Heart left ventricle (tissue), 16 donors: ENCODE measurements at regions of chr10 and their contacts with region 1.

Region 1: GRCh38 chr10:101840741-101841453 is 2.7 kb downstream of the KCNIP2 start:
- DNase-seq: peak; percentile 79 to 89 (median 83)
- ATAC-seq: peak; percentile 70 to 88 (median 85)
- H3K4me3 ChIP-seq: peak overlapping the region; percentile 1 to 59 (median 46)
- H3K27ac ChIP-seq: peak overlapping the region in 2 of 12 donors; percentile 22 to 50
- H3K4me1 ChIP-seq: peaks cover 0 to 75% (median 29%) of the 10 kb centered on the region in 12 donors
- H3K27me3 ChIP-seq: no peaks in the 10 kb centered on the region
- CTCF ChIP-seq: peak; percentile 86 to 96 (median 91)
- POLR2A ChIP-seq: no peak

Region 2: GRCh38 chr10:101879456-101880231 is 38.7 kb after region 1 on chr10:
- intact Hi-C with region 1: loop called in 2 of 10 experiments (anchors 2 to 5 kb)
- DNase-seq: no peak
- ATAC-seq: no peak
- H3K4me3 ChIP-seq: no peak overlapping the region
- H3K27ac ChIP-seq: no peak overlapping the region
- H3K4me1 ChIP-seq: peaks cover 0 to 30% (median 6%) of the 10 kb centered on the region in 12 donors
- H3K27me3 ChIP-seq: no peaks in the 10 kb centered on the region
- CTCF ChIP-seq: no peak
- POLR2A ChIP-seq: no peak

Region 3: GRCh38 chr10:102009801-102010425 is 169.0 kb after region 1 on chr10:
- intact Hi-C with region 1: loop called (anchors 1 to 5 kb)
- DNase-seq: peak in 4 of 5 donors; percentile 33 to 53 (median 44)
- ATAC-seq: peak; percentile 83 to 97 (median 96)
- H3K4me3 ChIP-seq: no peak overlapping the region
- H3K27ac ChIP-seq: no peak overlapping the region
- H3K4me1 ChIP-seq: peaks cover 0 to 12% (median 1%) of the 10 kb centered on the region in 12 donors
- H3K27me3 ChIP-seq: no peaks in the 10 kb centered on the region
- CTCF ChIP-seq: peak; percentile 73 to 93 (median 90)
- POLR2A ChIP-seq: no peak

Region 4: DNA sequence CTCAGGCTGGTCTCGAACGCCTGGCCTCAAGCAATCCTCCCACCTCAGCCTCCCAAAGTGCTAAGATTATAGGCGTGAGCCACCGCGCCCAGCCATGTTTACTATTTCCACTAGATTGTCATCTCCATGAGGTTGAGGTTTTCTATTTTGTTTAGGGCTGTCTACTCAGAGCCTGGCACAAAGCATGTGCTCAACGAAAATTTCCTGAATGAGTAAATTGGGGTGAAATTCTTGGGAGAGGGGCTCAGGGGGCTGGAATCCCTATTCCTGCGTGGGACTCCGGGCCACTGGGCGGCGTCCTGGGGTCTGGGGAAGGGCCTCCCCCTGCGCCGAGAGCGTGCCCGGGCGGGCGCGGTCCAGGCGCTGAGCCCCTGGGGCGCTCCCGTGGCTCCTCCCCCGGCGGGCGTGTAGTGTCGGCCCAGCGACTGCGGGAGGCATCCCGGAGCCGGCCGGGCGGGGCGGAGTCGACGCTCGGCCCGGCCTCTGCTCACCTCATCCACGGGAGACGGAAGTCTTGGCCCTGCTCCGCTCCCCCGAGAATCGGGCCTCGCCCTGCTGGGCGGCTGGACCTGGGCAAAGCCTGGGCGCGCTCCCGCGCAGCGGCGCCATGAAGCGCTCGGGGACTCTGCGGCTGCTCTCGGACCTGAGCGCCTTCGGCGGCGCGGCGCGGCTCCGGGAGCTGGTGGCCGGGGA is 224.1 kb after region 1 on chr10 and contains the start of gene HPS6:
- intact Hi-C with region 1: loop called in 3 of 10 experiments (anchors 2 to 5 kb)
- DNase-seq: peak; percentile 92 to 96 (median 95)
- ATAC-seq: peak; percentile 92 to 99 (median 98)
- H3K4me3 ChIP-seq: peak within 1 kb of the TSS; percentile 79 to 99 (median 94)
- H3K27ac ChIP-seq: peak within 1 kb of the TSS; percentile 85 to 98 (median 92)
- H3K4me1 ChIP-seq: peaks cover 8 to 50% (median 33%) of the 10 kb centered on the region in 12 donors
- H3K27me3 ChIP-seq: no peaks in the 10 kb centered on the region
- CTCF ChIP-seq: peak in 8 of 12 donors; percentile 10 to 48 (median 30)
- POLR2A ChIP-seq: peak in 1 of 2 donors; percentile 87
- total RNA-seq, gene HPS6: 7.8 to 23.1 (median 12.4) TPM

Region 5: GRCh38 chr10:102090772-102091171 is 249.9 kb after region 1 on chr10:
- intact Hi-C with region 1: no loop called
- DNase-seq: no peak
- ATAC-seq: no peak
- H3K4me3 ChIP-seq: no peak overlapping the region
- H3K27ac ChIP-seq: no peak overlapping the region
- H3K4me1 ChIP-seq: peaks cover 0 to 8% (median 0%) of the 10 kb centered on the region in 12 donors
- H3K27me3 ChIP-seq: no peaks in the 10 kb centered on the region
- CTCF ChIP-seq: no peak
- POLR2A ChIP-seq: no peak